K562 (cell line): ENCODE measurements at regions of chr19 and their contacts with region 1.

Region 1: DNA sequence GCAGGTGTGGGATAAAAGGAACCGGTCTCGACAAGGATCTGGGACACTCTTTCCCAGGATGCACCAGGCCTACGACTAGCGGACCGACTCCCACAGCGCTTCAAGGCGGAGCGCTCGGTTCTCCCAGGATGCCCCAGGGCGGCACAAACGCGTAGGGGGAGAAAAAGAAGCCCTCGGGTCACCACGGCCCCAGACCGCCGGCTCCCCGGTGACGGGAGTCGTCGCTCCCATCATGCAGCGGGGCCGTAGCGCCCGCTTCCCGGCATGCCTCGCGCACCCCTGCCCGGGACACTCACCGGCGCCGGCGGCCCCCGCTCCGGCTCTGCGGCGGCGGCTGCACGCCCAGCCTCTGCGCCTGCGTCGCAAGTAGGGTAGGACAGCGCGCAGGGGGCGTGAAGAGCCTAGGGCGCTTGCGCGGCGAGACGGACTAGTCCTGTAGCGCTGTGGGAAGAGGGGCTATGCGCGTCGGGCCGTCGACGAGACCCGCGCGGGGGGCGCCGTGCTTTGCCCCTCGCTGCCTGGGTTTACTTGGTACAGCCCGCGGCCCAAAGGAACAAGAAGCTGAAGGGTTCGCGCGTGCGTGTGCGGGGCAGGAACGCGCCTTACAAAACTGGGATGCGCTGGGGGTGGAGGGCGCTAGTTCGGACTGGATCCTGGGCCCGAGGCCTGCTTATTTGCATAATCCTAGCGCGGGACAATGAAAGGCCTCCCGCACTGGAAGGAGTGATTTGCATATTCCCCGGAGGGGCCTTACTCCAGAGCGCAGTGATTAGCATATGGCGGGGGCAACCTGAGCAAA is at the start of gene ZNF428:
- DNase-seq: peak; percentile 92 to 97 (median 92)
- ATAC-seq: peak; percentile 87
- H3K4me3 ChIP-seq: peak within 1 kb of the TSS; percentile 57
- H3K27ac ChIP-seq: peak within 1 kb of the TSS; percentile 99
- H3K4me1 ChIP-seq: peaks cover 47 to 66% of the 10 kb centered on the region in 2 experiments
- H3K27me3 ChIP-seq: no peaks in the 10 kb centered on the region
- CTCF ChIP-seq: no peak
- EP300 ChIP-seq: no peak
- POLR2A ChIP-seq: peak; percentile 92
- RAD21 ChIP-seq: no peak
- polyA plus RNA-seq, gene ZNF428: 0.15 to 0.23 TPM

Region 2: GRCh38 chr19:43555185-43555770 is 64.2 kb before region 1 on chr19:
- CTCF ChIA-PET with region 1: interaction called, 4 read pairs
- POLR2A ChIA-PET with region 1: no interaction called
- in situ Hi-C with region 1: no loop called
- intact Hi-C with region 1: loop called (anchors 10 kb)
- DNase-seq: peak; percentile 71 to 83 (median 76)
- ATAC-seq: peak; percentile 97
- H3K4me3 ChIP-seq: no peak overlapping the region
- H3K27ac ChIP-seq: no peak overlapping the region
- H3K4me1 ChIP-seq: peaks cover 0 to 8% of the 10 kb centered on the region in 2 experiments; a peak in 1 of 5 replicates
- H3K27me3 ChIP-seq: no peaks in the 10 kb centered on the region
- CTCF ChIP-seq: peak; percentile 85 to 88 (median 87)
- EP300 ChIP-seq: no peak
- POLR2A ChIP-seq: no peak
- RAD21 ChIP-seq: peak; percentile 51 to 70

Region 3: GRCh38 chr19:43606569-43607229 is 12.8 kb before region 1 on chr19:
- CTCF ChIA-PET with region 1: no interaction called
- POLR2A ChIA-PET with region 1: interaction called, 35 read pairs
- in situ Hi-C with region 1: no loop called
- intact Hi-C with region 1: no loop called
- DNase-seq: no peak
- ATAC-seq: no peak
- H3K4me3 ChIP-seq: no peak overlapping the region
- H3K27ac ChIP-seq: peak overlapping the region; percentile 19; the same call in 1 of the 3 replicates
- H3K4me1 ChIP-seq: peaks cover 20 to 22% of the 10 kb centered on the region in 2 experiments
- H3K27me3 ChIP-seq: no peaks in the 10 kb centered on the region
- CTCF ChIP-seq: no peak
- EP300 ChIP-seq: no peak
- POLR2A ChIP-seq: no peak
- RAD21 ChIP-seq: no peak